Activated naive CD4-positive, alpha-beta T cell treated with anti-CD3 and anti-CD28 coated beads, Interleukin-2, amount 10 ng/mL, durations not matched to agents 7 days and 5 days (primary cell): ENCODE measurements at regions of chr2 and their contacts with region 1.

Region 1: DNA sequence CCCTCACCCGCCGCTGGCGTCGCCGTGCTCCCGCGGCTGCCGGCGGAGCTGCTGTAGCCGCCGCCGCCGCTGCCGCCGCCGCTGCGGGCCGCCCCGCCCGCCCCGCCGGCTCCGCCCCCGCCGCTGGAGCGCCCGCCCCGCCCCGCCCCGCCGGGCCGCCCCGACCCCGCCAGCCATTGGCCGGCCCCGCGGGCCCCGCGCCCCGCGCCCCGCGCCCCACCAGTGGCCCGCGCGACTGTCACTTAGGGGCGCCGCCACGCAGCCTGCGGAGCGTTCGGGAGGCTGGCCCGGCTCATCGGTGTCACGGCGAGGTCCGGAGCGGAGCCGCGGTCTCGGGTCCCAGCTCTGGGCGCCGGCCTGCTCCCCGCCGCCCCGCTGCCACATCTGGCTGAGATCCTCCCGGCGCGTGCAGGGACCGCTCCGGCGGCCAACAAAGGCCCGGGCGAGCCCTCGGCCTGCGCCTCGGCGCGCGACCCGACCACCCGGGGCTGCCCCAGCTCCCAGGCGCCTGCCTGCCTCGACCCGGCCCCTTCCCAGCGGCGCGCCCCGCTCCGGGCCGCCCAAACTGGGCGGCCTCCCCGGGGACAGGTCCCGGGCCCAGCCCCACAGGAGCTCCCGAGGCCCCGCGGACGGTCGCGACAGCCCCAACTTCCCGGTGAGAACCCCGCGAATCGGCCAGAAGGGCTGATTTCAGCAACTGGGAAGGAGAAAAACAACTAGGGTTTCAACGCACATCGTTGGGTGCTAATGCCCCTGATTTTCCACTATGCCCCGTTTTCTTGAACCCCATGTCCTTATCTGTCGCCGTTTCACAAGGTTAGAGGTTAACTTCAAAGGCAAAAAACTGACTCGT is at the start of gene MGAT4A:
- DNase-seq: peak; percentile 85
- H3K4me3 Mint-ChIP-seq: peak within 1 kb of the TSS; percentile 86
- H3K27ac Mint-ChIP-seq: peak within 1 kb of the TSS; percentile 94
- H3K4me1 Mint-ChIP-seq: peaks cover 68% of the 10 kb centered on the region
- H3K27me3 Mint-ChIP-seq: no peaks in the 10 kb centered on the region

Region 2: DNA sequence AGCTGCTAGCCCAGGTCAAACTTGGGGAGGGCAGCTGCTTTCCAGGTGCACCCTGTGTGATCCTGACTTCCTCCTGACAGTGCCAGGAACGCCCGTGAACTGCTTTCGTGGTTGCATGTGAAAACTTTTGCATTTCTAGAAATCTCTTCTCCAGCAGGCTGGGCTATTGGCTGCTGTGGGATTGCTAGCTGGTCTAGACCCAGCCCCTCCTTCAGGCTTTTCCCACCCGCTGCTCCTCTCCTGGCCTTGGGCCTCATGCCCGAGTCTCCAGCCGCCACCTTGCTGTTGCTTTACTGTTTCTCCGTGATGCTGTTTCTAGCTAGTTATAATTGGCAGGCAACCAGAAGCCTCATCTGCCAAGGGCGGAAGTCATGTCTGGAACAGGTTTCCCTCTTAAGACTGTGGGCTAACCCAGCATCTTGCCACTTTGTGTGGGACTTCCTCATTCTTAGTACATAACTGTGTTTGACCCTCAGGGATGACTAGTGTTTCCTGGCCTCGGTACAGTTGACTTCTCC is 26.7 kb after region 1 on chr2:
- CTCF ChIA-PET with region 1: interaction called, 10 read pairs
- DNase-seq: peak; percentile 71
- H3K4me3 Mint-ChIP-seq: peak overlapping the region; percentile 62
- H3K27ac Mint-ChIP-seq: peak overlapping the region; percentile 93
- H3K4me1 Mint-ChIP-seq: peaks cover 59% of the 10 kb centered on the region
- H3K27me3 Mint-ChIP-seq: no peaks in the 10 kb centered on the region

Region 3: DNA sequence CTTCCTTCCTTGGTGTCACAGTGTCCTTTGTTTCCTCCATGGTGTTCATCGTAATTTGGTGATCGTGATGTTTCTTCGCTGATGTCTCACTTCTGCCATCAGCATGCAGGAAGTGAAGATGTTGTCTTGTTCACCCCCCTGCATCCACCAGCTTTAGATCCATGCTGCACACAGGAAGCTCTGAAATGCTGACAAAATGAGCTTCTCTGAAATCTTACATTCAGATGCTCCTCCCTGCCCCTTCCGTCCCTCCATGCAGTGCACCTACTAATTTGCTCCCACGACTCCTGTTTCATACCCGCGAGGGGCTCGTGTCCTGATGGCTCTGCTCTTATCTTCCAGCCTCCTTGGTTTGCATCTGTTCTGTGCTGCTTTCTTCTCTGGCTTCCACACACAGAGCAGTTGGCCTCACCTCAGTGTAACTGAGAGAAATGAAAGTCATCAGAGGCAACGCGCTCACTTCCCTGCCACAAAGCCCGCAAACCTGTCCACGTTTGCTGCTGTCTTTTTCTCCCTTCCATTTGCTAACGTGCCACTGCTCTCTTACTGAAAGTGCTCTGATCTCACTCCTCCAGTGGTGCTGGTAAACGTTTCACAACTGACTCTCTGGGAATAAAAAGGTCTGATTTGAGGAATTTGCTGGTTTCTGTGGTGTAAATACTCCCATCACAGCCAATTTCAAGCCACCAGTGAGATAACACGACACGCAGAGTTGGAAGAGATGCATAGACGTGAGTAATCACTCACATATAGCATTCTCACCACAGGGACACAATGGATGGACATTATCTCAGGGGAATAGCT is 40.7 kb after region 1 on chr2:
- CTCF ChIA-PET with region 1: interaction called, 38 read pairs
- DNase-seq: peak; percentile 82
- H3K4me3 Mint-ChIP-seq: peak overlapping the region; percentile 86
- H3K27ac Mint-ChIP-seq: peak overlapping the region; percentile 99
- H3K4me1 Mint-ChIP-seq: peaks cover 70% of the 10 kb centered on the region
- H3K27me3 Mint-ChIP-seq: no peaks in the 10 kb centered on the region

Region 4: GRCh38 chr2:98793299-98793698 is 62.0 kb after region 1 on chr2:
- CTCF ChIA-PET with region 1: no interaction called
- DNase-seq: no peak
- H3K4me3 Mint-ChIP-seq: no peak overlapping the region
- H3K27ac Mint-ChIP-seq: no peak overlapping the region
- H3K4me1 Mint-ChIP-seq: peaks cover 3% of the 10 kb centered on the region
- H3K27me3 Mint-ChIP-seq: peaks cover 28% of the 10 kb centered on the region